H1 (cell line): ENCODE measurements at regions of chr1 and their contacts with region 1.

Region 1: GRCh38 chr1:156601122-156601830 is at the start of gene GPATCH4:
- DNase-seq: peak in 1 of 2 experiments; percentile 86
- H3K4me3 ChIP-seq: peak within 1 kb of the TSS; percentile 86 to 97 (median 91)
- H3K27ac ChIP-seq: peak within 1 kb of the TSS; percentile 73
- H3K4me1 ChIP-seq: peaks cover 0 to 8% (median 3%) of the 10 kb centered on the region in 4 experiments; a peak in 5 of 7 replicates
- H3K27me3 ChIP-seq: no peaks in the 10 kb centered on the region
- CTCF ChIP-seq: no peak
- EP300 ChIP-seq: no peak
- POLR2A ChIP-seq: peak; percentile 66 to 80; a peak in 2 of 3 replicates
- RAD21 ChIP-seq: no peak
- total RNA-seq, gene GPATCH4: 47.9 and 48.5 TPM in 2 replicates

Region 2: GRCh38 chr1:156394835-156395461 is 206.3 kb before region 1 on chr1:
- CTCF ChIA-PET with region 1: no interaction called
- POLR2A ChIA-PET with region 1: no interaction called
- DNase-seq: no peak
- H3K4me3 ChIP-seq: no peak overlapping the region
- H3K27ac ChIP-seq: no peak overlapping the region
- H3K4me1 ChIP-seq: peaks cover 15 to 36% (median 26%) of the 10 kb centered on the region in 4 experiments
- H3K27me3 ChIP-seq: peaks cover 0 to 24% (median 19%) of the 10 kb centered on the region in 4 experiments; a peak in 6 of 7 replicates
- CTCF ChIP-seq: no peak
- EP300 ChIP-seq: no peak
- POLR2A ChIP-seq: no peak
- RAD21 ChIP-seq: no peak

Region 3: DNA sequence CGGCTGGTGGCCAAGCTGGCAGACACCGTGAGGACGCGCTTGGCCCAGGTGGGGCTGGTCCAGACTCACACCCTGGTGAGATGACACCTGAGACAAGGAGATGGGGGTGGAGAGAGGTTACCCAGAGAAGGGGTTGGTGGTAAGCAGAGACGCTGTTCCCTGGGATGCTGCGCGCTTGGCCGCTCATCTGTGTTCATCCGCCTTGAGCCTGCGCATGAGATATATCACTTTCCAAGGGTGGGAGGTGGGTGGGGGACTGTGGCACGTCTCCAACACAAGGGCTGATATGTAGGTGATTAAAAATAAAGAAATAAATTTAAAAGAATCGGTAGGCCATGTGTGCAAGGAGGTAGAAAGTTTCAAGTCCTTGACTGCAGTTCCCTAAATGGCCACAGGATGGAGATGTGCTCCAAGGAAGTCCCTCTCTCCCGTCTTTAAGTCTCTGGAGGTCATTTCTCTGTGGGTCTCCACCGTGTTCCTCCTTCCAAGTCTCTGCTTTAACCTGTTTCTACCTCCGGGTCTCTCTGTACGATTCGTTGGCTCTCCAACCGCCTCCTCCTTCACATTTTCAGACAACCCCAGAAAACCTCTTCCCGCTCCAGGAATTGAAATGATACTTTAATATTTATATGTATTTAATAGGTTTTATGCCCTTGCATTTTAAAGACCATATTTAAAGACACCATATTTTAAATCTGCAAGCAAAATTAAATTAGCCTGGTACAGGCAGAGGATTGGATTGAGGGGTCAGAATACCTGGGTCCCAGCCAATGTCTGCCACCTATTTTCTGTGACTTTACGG is 17.3 kb before region 1 on chr1:
- CTCF ChIA-PET with region 1: interaction called, 30 read pairs
- POLR2A ChIA-PET with region 1: interaction called, 9 read pairs
- DNase-seq: peak in 1 of 2 experiments; percentile 88
- H3K4me3 ChIP-seq: peak overlapping the region in 1 of 4 experiments; percentile 42; a peak in 3 of 8 replicates
- H3K27ac ChIP-seq: no peak overlapping the region
- H3K4me1 ChIP-seq: peaks cover 0 to 10% (median 3%) of the 10 kb centered on the region in 4 experiments; a peak in 5 of 7 replicates
- H3K27me3 ChIP-seq: no peaks in the 10 kb centered on the region
- CTCF ChIP-seq: peak; percentile 50 to 87 (median 85)
- EP300 ChIP-seq: no peak
- POLR2A ChIP-seq: no peak
- RAD21 ChIP-seq: peak; percentile 81 to 86